Mammary epithelial cell (primary cell): ENCODE measurements at regions of chr2 and their contacts with region 1.

Region 1: GRCh38 chr2:69914170-69914960 is 544 bp upstream of the MXD1 start:
- DNase-seq: peak; percentile 100
- H3K4me3 ChIP-seq: peak overlapping the region; percentile 63 to 91 (median 79)
- H3K27ac ChIP-seq: peak overlapping the region; percentile 90
- H3K4me1 ChIP-seq: peaks cover 31% of the 10 kb centered on the region
- H3K27me3 ChIP-seq: no peaks in the 10 kb centered on the region
- CTCF ChIP-seq: peak in 1 of 2 donors; percentile 10

Region 2: DNA sequence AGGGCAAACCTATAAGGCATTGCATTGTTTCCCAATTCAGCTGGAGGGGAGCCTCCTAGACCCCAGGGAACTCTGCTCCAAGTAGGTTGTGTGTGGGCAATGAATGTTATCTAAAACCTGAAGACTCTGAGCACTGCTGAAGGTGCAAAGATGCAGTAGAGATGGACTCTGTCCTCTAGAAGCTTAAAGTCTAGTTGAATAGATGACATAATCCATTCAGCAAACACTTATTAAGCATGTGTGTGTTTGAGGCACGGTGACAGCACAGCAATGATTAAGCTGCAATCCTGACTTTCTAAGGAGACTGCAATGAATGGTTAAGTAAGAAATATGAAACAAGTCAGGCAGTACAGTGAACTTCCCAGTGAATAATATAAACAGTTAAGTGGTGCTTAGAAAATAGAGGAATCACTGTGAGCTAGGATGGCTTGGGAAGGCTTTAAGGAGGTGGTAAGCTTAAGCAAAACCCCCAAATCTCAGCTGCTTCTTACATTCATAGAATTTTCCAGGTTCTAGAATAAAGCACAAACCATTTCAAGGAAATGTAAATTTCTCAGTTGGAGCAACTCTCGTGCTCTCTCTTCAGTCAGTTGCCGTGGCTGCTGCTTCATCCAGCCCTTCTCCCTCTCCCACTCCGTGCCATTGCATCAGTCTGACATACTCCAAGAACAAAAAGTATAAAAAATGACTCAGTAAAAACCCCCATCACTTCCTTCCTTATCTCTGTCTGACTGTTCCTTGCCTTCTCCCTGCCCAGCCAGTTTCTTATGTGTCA is 19.7 kb after region 1 on chr2:
- CTCF ChIA-PET with region 1: no interaction called
- dilution Hi-C with region 1: no loop called
- in situ Hi-C with region 1: no loop called
- intact Hi-C with region 1: no loop called
- DNase-seq: peak; percentile 86
- H3K4me3 ChIP-seq: no peak overlapping the region
- H3K27ac ChIP-seq: peak overlapping the region; percentile 73
- H3K4me1 ChIP-seq: peaks cover 18% of the 10 kb centered on the region
- H3K27me3 ChIP-seq: no peaks in the 10 kb centered on the region
- CTCF ChIP-seq: no peak

Region 3: GRCh38 chr2:69946351-69947077 is 32.1 kb after region 1 on chr2:
- CTCF ChIA-PET with region 1: no interaction called
- dilution Hi-C with region 1: no loop called
- in situ Hi-C with region 1: no loop called
- intact Hi-C with region 1: loop called (anchors 1 kb)
- DNase-seq: peak; percentile 89
- H3K4me3 ChIP-seq: no peak overlapping the region
- H3K27ac ChIP-seq: peak overlapping the region; percentile 97
- H3K4me1 ChIP-seq: peaks cover 35% of the 10 kb centered on the region
- H3K27me3 ChIP-seq: no peaks in the 10 kb centered on the region
- CTCF ChIP-seq: no peak

Region 4: GRCh38 chr2:69969126-69969963 is 55.0 kb after region 1 on chr2:
- CTCF ChIA-PET with region 1: no interaction called
- dilution Hi-C with region 1: no loop called
- in situ Hi-C with region 1: no loop called
- intact Hi-C with region 1: no loop called
- DNase-seq: no peak
- H3K4me3 ChIP-seq: no peak overlapping the region
- H3K27ac ChIP-seq: no peak overlapping the region
- H3K4me1 ChIP-seq: peaks cover 5% of the 10 kb centered on the region
- H3K27me3 ChIP-seq: no peaks in the 10 kb centered on the region
- CTCF ChIP-seq: no peak

Region 5: DNA sequence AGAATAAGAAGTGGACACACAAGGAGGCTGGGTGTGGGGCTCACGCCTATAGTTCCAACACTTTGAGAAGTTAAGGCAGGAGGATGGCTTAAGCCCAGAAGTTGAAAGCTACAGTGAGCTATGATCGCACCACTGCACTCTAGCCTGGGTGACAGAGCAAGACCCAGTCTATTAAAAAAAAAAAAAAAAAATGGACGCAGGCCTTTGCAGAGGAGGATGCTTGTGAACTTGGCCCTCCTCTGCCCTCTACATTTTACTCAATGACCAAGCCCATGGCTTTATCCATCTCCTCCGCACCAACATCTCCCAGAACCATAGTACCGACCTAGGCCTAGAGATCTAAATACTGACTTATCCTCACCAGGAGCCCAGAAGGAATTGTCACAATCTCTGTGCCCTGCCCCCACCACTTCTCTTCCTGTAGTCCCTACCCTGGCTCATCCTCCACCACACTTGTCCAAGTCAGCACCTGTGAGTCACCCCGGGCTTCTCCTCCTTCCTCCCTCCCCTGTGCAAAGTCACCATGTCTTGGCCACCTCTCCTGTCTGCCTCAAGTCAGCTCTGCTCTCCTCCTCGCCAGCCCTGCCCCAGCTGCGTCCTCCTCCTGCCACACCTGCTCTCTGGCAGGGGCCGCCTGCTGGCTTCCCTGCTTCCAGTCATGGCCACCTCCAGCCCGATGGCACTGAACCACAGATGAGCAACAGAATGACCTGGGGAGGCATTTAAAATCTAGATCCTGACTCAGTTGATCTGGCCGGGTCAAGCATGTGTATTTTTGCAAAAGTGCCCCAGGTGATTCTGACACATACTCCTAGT is 82.9 kb after region 1 on chr2:
- CTCF ChIA-PET with region 1: no interaction called
- dilution Hi-C with region 1: no loop called
- in situ Hi-C with region 1: no loop called
- intact Hi-C with region 1: loop called (anchors 5 kb)
- DNase-seq: peak; percentile 81
- H3K4me3 ChIP-seq: no peak overlapping the region
- H3K27ac ChIP-seq: peak overlapping the region; percentile 44
- H3K4me1 ChIP-seq: peaks cover 23% of the 10 kb centered on the region
- H3K27me3 ChIP-seq: no peaks in the 10 kb centered on the region
- CTCF ChIP-seq: peak in 1 of 2 donors; percentile 32

Region 6: GRCh38 chr2:70086838-70087701 is 172.7 kb after region 1 on chr2 and contains the start of gene PCBP1:
- CTCF ChIA-PET with region 1: no interaction called
- dilution Hi-C with region 1: no loop called
- in situ Hi-C with region 1: no loop called
- intact Hi-C with region 1: loop called (anchors 1 kb)
- DNase-seq: peak; percentile 86
- H3K4me3 ChIP-seq: peak within 1 kb of the TSS; percentile 85 to 96 (median 86)
- H3K27ac ChIP-seq: peak within 1 kb of the TSS; percentile 99
- H3K4me1 ChIP-seq: peaks cover 36% of the 10 kb centered on the region
- H3K27me3 ChIP-seq: no peaks in the 10 kb centered on the region
- CTCF ChIP-seq: no peak
- total RNA-seq, gene PCBP1: 47.2 to 258 TPM

Region 7: GRCh38 chr2:70248181-70248847 is 333.9 kb after region 1 on chr2 and contains the start of gene TIA1:
- CTCF ChIA-PET with region 1: no interaction called
- dilution Hi-C with region 1: loop called (anchors 25 kb)
- in situ Hi-C with region 1: no loop called
- intact Hi-C with region 1: loop called (anchors 1 kb)
- DNase-seq: peak; percentile 95
- H3K4me3 ChIP-seq: peak within 1 kb of the TSS; percentile 64 to 96 (median 88)
- H3K27ac ChIP-seq: peak within 1 kb of the TSS; percentile 87
- H3K4me1 ChIP-seq: no peaks in the 10 kb centered on the region
- H3K27me3 ChIP-seq: no peaks in the 10 kb centered on the region
- CTCF ChIP-seq: no peak
- total RNA-seq, gene TIA1: 53.0 to 61.6 TPM

Region 8: GRCh38 chr2:70647873-70648481 is 733.6 kb after region 1 on chr2:
- CTCF ChIA-PET with region 1: interaction called, 5 read pairs
- dilution Hi-C with region 1: no loop called
- in situ Hi-C with region 1: no loop called
- intact Hi-C with region 1: loop called (anchors 10 kb)
- DNase-seq: peak; percentile 51
- H3K4me3 ChIP-seq: no peak overlapping the region
- H3K27ac ChIP-seq: no peak overlapping the region
- H3K4me1 ChIP-seq: no peaks in the 10 kb centered on the region
- H3K27me3 ChIP-seq: no peaks in the 10 kb centered on the region
- CTCF ChIP-seq: peak; percentile 100